ENCODE measurements at regions of chr6 and their contacts with region 1.

Region 1: DNA sequence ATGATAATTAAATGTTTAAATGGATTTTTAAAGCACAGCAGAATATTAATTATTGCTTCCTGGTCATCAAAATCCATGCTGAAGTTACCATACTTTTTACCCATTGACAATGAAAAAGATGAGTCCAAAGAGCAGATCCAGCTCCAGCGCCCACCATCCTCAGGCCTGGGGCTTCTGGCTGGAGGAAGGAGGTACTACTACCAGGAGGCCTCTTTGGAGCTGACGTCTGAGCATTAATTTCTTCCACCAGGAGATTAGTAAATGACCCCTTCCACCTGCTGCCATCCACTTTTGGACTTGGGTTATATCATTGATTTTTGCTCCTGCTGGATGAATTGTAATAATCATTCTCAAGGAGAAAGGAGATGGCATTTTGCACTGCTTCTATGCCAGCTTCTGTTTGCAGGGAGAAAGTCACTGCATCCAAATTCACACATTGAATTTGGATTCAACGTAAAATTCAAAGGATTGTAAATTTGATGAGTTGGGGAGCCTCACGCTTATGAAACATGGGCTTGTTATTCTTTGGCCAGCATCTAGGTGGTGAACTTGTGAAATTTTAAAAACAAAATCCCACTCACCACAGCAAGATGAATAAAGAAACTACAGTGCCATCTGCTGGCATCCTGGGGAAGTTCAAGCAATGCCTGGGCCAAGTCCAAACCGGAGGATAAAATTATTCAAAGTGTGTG is 121.8 kb downstream of the SASH1 start:
- DNase-seq: peak; percentile 63
- ATAC-seq: peak; percentile 90
- H3K4me3 ChIP-seq: no peak overlapping the region
- H3K27ac ChIP-seq: no peak overlapping the region
- H3K4me1 ChIP-seq: no peaks in the 10 kb centered on the region
- H3K27me3 ChIP-seq: no peaks in the 10 kb centered on the region
- CTCF ChIP-seq: peak; percentile 87
- EP300 ChIP-seq: no peak
- POLR2A ChIP-seq: no peak
- RAD21 ChIP-seq: peak; percentile 74

Region 2: GRCh38 chr6:147506704-147507114 is 957.8 kb before region 1 on chr6:
- CTCF ChIA-PET with region 1: no interaction called
- POLR2A ChIA-PET with region 1: no interaction called
- in situ Hi-C with region 1: loop called (anchors 5 kb)
- intact Hi-C with region 1: loop called (anchors 5 kb)
- DNase-seq: peak; percentile 38
- ATAC-seq: peak; percentile 80
- H3K4me3 ChIP-seq: peak overlapping the region in 1 of 3 experiments; percentile 69; a peak in 1 of 6 replicates
- H3K27ac ChIP-seq: no peak overlapping the region
- H3K4me1 ChIP-seq: peaks cover 37% of the 10 kb centered on the region
- H3K27me3 ChIP-seq: peaks cover 10 to 46% of the 10 kb centered on the region in 2 experiments
- CTCF ChIP-seq: peak; percentile 95
- EP300 ChIP-seq: no peak
- POLR2A ChIP-seq: no peak
- RAD21 ChIP-seq: peak; percentile 92

Region 3: GRCh38 chr6:148177589-148178233 is 286.8 kb before region 1 on chr6:
- CTCF ChIA-PET with region 1: interaction called, 60 read pairs
- POLR2A ChIA-PET with region 1: no interaction called
- in situ Hi-C with region 1: loop called (anchors 5 kb)
- intact Hi-C with region 1: no loop called
- DNase-seq: peak; percentile 30
- ATAC-seq: peak; percentile 68
- H3K4me3 ChIP-seq: no peak overlapping the region
- H3K27ac ChIP-seq: no peak overlapping the region
- H3K4me1 ChIP-seq: peaks cover 7% of the 10 kb centered on the region; the same call in 1 of the 2 replicates
- H3K27me3 ChIP-seq: no peaks in the 10 kb centered on the region
- CTCF ChIP-seq: peak; percentile 87
- EP300 ChIP-seq: no peak
- POLR2A ChIP-seq: no peak
- RAD21 ChIP-seq: peak; percentile 60

Region 4: DNA sequence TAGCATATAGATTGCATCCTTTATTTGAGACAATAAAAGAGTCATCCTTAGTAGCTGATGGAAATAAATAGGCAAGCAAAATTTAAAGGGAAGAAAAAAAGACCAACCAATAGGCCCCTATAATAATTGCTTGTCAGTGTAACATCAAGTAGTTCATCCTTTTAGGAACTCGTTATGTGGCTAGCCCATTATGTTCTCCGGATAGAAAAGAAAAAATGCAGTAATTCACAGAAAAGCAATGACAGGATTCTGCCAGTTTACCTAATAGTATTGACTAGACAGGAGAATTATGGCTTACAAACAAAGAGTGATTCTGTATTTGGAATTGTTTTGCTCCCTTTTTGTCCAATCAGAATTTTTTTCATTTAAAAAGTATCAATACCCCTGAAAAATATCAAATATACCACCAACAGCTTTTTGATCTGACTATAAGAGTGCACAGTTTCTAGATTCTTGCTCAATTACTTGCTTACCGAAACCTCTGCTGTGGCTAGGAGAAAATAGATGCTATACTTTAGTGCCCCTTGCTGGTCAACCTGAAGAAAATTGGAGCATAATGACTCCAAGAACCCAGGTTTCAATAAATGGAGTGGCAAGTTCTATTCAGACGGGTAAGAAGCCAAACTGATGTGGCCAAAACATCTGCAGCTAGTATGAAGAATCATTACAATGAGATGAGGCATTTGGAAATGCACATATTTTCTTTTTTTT is 213.3 kb before region 1 on chr6:
- CTCF ChIA-PET with region 1: no interaction called
- POLR2A ChIA-PET with region 1: no interaction called
- in situ Hi-C with region 1: no loop called
- intact Hi-C with region 1: loop called (anchors 2 kb)
- DNase-seq: peak; percentile 37
- ATAC-seq: peak; percentile 63
- H3K4me3 ChIP-seq: no peak overlapping the region
- H3K27ac ChIP-seq: no peak overlapping the region
- H3K4me1 ChIP-seq: no peaks in the 10 kb centered on the region
- H3K27me3 ChIP-seq: no peaks in the 10 kb centered on the region
- CTCF ChIP-seq: peak; percentile 56
- EP300 ChIP-seq: no peak
- POLR2A ChIP-seq: no peak
- RAD21 ChIP-seq: no peak

Region 5: GRCh38 chr6:148342357-148343046 is 122.0 kb before region 1 on chr6 and contains the start of gene SASH1:
- CTCF ChIA-PET with region 1: no interaction called
- POLR2A ChIA-PET with region 1: no interaction called
- in situ Hi-C with region 1: no loop called
- intact Hi-C with region 1: loop called (anchors 1 kb)
- DNase-seq: peak; percentile 96
- ATAC-seq: peak; percentile 90
- H3K4me3 ChIP-seq: peak within 1 kb of the TSS; percentile 62 to 93 (median 82)
- H3K27ac ChIP-seq: peak within 1 kb of the TSS; percentile 95
- H3K4me1 ChIP-seq: peaks cover 53% of the 10 kb centered on the region
- H3K27me3 ChIP-seq: no peaks in the 10 kb centered on the region; a peak in 1 of 5 replicates
- CTCF ChIP-seq: no peak
- EP300 ChIP-seq: peak in 1 of 2 experiments; percentile 47; a peak in 1 of 4 replicates
- POLR2A ChIP-seq: peak; percentile 56 to 83
- RAD21 ChIP-seq: peak; percentile 8; the same call in 1 of the 2 replicates
- total RNA-seq, gene SASH1: 8.2 and 8.9 TPM in 2 replicates

Measured in HepG2 (cell line).